ENCODE measurements at regions of chr11 and their contacts with region 1.

Region 1: DNA sequence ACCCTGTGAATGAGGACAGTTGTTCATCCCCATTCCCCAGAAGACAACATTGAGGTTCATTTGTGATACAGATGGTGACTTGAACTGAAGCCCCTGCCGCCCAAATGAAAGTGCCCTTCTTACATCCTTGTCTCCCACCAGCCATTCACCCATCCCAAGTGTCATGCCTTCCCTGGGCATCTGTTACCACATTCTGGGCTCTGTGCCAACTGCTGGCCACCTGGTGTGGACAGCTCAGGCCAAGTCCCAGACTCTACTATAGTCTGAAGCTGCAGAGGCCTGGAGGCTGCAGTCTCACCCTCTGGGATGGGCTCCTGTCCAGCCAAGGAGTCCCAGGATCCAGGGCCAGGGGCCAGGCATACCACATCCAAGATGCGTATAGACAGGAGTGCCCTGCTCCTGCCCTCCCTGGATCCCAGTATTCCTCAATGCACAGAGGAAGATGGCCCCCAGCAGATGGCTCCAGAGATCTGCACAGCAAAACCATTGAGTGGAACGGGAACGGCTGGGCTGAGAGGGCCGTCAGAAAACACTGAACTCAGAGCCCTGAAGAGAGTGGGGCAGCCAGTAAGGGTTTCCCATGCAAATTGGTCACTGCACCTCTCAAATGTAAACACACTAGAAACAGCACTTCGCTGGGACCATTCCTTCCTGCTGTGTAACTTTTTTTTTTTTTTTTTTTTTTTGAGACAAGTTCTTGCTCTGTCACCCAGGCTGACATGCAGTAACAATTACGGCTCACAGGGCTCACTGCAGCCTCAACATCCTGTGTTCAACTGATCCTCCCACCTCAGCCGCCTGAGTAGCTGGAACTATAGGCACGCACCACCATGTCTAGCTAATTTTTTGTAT is 22.8 kb downstream of the ARRB1 start:
- DNase-seq: peak; percentile 88
- H3K4me3 Mint-ChIP-seq: peak overlapping the region; percentile 67
- H3K27ac Mint-ChIP-seq: peak overlapping the region; percentile 77
- H3K4me1 Mint-ChIP-seq: peaks cover 56% of the 10 kb centered on the region
- H3K27me3 Mint-ChIP-seq: no peaks in the 10 kb centered on the region

Region 2: DNA sequence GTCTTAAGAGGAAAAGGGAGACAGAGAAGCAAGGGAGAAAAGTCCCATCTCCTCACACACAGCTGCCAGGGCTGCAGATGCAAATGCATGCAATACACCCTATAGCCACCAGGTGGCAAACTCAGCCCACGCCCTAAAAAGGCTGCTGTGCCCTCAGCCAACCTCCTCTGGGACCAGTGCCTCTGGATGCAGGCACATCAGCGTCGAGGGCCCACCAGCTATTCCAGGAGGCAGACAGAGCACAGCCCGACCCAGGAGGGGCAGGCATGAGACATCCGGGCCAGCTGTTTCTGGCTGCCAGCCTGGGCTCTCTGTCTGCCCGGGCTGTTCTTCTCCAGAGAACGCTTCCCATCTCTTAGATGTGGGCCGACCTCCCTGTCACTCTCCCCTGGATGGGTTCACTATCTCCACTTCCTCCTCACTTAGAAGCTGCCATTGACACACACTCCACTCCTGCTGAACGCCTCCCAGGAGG is 48.4 kb before region 1 on chr11:
- intact Hi-C with region 1: loop called (anchors 2 kb)
- DNase-seq: peak; percentile 94
- H3K4me3 Mint-ChIP-seq: no peak overlapping the region
- H3K27ac Mint-ChIP-seq: no peak overlapping the region
- H3K4me1 Mint-ChIP-seq: peaks cover 24% of the 10 kb centered on the region
- H3K27me3 Mint-ChIP-seq: no peaks in the 10 kb centered on the region

Region 3: GRCh38 chr11:75340050-75340409 is 11.4 kb after region 1 on chr11:
- intact Hi-C with region 1: loop called (anchors 1 kb)
- DNase-seq: no peak
- H3K4me3 Mint-ChIP-seq: peak overlapping the region; percentile 65
- H3K27ac Mint-ChIP-seq: peak overlapping the region; percentile 80
- H3K4me1 Mint-ChIP-seq: peaks cover 73% of the 10 kb centered on the region
- H3K27me3 Mint-ChIP-seq: no peaks in the 10 kb centered on the region

Region 4: DNA sequence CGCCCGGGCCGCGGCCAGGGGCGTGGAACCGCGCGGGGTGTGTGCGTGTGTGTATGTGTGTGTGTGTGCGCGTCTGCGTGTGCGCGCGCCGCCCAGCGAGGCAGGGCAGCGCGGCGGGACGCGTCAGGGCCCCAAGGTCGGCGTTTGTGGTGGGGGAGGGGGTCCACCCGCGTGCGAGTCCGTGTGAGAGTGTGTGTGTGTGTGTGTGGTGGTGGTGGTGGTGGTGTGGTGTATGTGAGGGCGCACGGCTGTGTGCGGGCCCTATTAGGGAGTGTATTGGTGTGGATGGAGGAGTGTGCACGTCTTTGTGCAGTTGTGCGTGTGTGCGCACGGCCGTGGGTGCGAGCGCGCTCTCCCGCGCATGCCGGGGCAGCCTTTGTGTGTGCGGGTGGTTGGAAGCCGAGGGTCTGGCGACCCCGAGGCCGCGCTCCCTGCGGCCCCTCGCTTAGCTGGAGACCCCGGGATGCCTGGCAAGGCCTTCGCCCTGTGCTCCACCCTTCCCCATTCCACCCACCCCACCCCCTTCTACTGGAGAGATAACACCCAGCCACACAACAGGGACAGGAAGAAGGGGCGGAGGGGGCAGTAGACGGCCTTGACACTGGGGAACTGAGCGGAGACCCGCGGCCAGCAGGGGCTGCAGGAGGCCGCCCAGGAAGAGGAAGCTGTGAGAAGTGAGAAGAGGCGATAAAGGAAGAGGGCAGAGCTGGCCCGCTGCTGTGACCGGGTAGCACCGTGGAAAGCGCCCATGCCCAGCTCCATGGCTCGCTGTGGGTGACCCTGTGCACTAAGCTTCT is 23.3 kb after region 1 on chr11:
- intact Hi-C with region 1: loop called (anchors 1 kb)
- DNase-seq: peak; percentile 91
- H3K4me3 Mint-ChIP-seq: peak overlapping the region; percentile 90
- H3K27ac Mint-ChIP-seq: peak overlapping the region; percentile 89
- H3K4me1 Mint-ChIP-seq: peaks cover 53% of the 10 kb centered on the region
- H3K27me3 Mint-ChIP-seq: no peaks in the 10 kb centered on the region

Measured in activated CD4-positive, alpha-beta T cell treated with anti-CD3 and anti-CD28 coated beads, Interleukin-2, amount 10 ng/mL, durations not matched to agents 24 days and 14 days (primary cell).